Naive thymus-derived CD4-positive, alpha-beta T cell (primary cell): ENCODE measurements at regions of chr15 and their contacts with region 1.

Region 1: GRCh38 chr15:95105229-95105628 is 873.9 kb downstream of the MCTP2 start:
- DNase-seq: no peak
- ATAC-seq: no peak
- H3K4me3 ChIP-seq: no peak overlapping the region
- H3K4me3 Mint-ChIP-seq: no peak overlapping the region
- H3K27ac ChIP-seq: no peak overlapping the region
- H3K27ac Mint-ChIP-seq: no peak overlapping the region
- H3K4me1 ChIP-seq: no peaks in the 10 kb centered on the region
- H3K4me1 Mint-ChIP-seq: no peaks in the 10 kb centered on the region
- H3K27me3 ChIP-seq: no peaks in the 10 kb centered on the region
- H3K27me3 Mint-ChIP-seq: peaks cover 0 to 4% (median 0%) of the 10 kb centered on the region in 5 donors

Region 2: GRCh38 chr15:96549136-96549535 is 1443.9 kb after region 1 on chr15:
- CTCF ChIA-PET with region 1: no interaction called
- POLR2A ChIA-PET with region 1: no interaction called
- intact Hi-C with region 1: loop called in 1 of 2 experiments (anchors 5 kb)
- DNase-seq: no peak
- ATAC-seq: no peak
- H3K4me3 ChIP-seq: no peak overlapping the region
- H3K4me3 Mint-ChIP-seq: no peak overlapping the region
- H3K27ac ChIP-seq: no peak overlapping the region
- H3K27ac Mint-ChIP-seq: no peak overlapping the region
- H3K4me1 ChIP-seq: no peaks in the 10 kb centered on the region
- H3K4me1 Mint-ChIP-seq: no peaks in the 10 kb centered on the region
- H3K27me3 ChIP-seq: no peaks in the 10 kb centered on the region
- H3K27me3 Mint-ChIP-seq: peaks cover 0 to 7% (median 4%) of the 10 kb centered on the region in 5 donors